Right lobe of liver (tissue), 6 donors: ENCODE measurements at regions of chr10 and their contacts with region 1.

Region 1: GRCh38 chr10:96642973-96643372 is 56.2 kb upstream of the TM9SF3 start:
- DNase-seq: peak; percentile 84 to 88 (median 87)
- ATAC-seq: peak; percentile 43 to 77 (median 68)
- H3K4me3 ChIP-seq: no peak overlapping the region
- H3K27ac ChIP-seq: no peak overlapping the region
- H3K4me1 ChIP-seq: peaks cover 0 to 49% (median 19%) of the 10 kb centered on the region in 4 donors
- H3K27me3 ChIP-seq: no peaks in the 10 kb centered on the region
- CTCF ChIP-seq: peak; percentile 54 to 91 (median 78)
- POLR2A ChIP-seq: no peak

Region 2: GRCh38 chr10:96719850-96720421 is 77.0 kb after region 1 on chr10:
- intact Hi-C with region 1: loop called in 1 of 2 experiments (anchors 5 kb)
- DNase-seq: peak; percentile 83 to 87 (median 84)
- ATAC-seq: peak; percentile 63 to 82 (median 78)
- H3K4me3 ChIP-seq: peak overlapping the region; percentile 62 to 92 (median 72)
- H3K27ac ChIP-seq: peak overlapping the region; percentile 78 to 95 (median 94)
- H3K4me1 ChIP-seq: peaks cover 0 to 34% (median 13%) of the 10 kb centered on the region in 4 donors
- H3K27me3 ChIP-seq: no peaks in the 10 kb centered on the region
- CTCF ChIP-seq: peak; percentile 55 to 70 (median 66)
- POLR2A ChIP-seq: no peak

Region 3: DNA sequence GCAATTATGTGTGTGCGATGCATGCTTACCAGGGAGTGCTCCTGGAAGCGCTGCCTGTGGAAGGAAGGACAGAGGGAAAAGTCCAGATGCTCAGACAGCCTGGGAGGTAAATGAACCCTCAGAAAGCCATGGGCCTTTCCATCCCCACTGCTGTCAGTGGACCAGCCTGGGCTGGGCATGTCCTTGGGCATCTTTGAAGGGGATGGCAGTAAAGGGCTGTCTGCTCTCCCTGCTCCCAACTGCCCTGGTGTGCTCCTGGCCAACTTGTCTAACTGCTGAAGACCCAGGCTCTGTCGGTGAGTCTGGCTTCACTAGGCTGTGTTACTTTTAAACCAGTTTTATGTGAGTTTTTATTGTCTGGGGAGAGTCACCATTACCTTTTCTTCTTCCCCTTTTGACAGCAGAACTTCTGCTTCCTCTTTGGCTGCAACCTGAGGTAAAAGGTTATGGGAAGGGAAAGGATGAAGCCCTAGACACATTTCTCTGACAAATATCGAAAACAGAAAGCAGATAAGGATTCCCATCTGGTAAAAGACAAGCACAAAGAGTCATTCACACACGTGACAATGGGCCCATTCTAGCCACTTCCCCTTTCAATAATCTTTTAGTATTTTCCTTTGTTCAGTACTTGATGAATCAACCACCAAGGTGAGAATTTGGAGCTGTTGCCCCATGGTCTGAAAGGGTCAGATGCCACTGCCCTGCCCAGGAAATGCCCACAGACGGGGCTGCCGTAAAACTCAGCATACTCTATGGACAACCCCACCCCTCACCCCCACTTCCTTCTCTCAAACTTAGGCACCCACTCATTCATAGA is 105.0 kb after region 1 on chr10:
- intact Hi-C with region 1: no loop called
- DNase-seq: no peak
- ATAC-seq: peak; percentile 18 to 60 (median 38)
- H3K4me3 ChIP-seq: no peak overlapping the region
- H3K27ac ChIP-seq: no peak overlapping the region
- H3K4me1 ChIP-seq: no peaks in the 10 kb centered on the region
- H3K27me3 ChIP-seq: no peaks in the 10 kb centered on the region
- CTCF ChIP-seq: no peak
- POLR2A ChIP-seq: no peak